Caco-2 (cell line): ENCODE measurements at regions of chr12 and their contacts with region 1.

Region 1: GRCh38 chr12:68428724-68429501 is 96.8 kb upstream of the MDM1 start:
- DNase-seq: peak; percentile 72 to 79
- H3K4me3 ChIP-seq: no peak overlapping the region
- H3K4me3 Mint-ChIP-seq: peak overlapping the region; percentile 45
- H3K27ac Mint-ChIP-seq: peak overlapping the region; percentile 94
- H3K4me1 ChIP-seq: peaks cover 54% of the 10 kb centered on the region
- H3K4me1 Mint-ChIP-seq: peaks cover 29% of the 10 kb centered on the region
- H3K27me3 ChIP-seq: no peaks in the 10 kb centered on the region
- H3K27me3 Mint-ChIP-seq: no peaks in the 10 kb centered on the region
- CTCF ChIP-seq: no peak

Region 2: GRCh38 chr12:68331869-68332727 is 96.8 kb before region 1 on chr12 and contains the start of gene MDM1:
- CTCF ChIA-PET with region 1: no interaction called
- POLR2A ChIA-PET with region 1: no interaction called
- intact Hi-C with region 1: loop called (anchors 1 kb)
- DNase-seq: peak; percentile 97 to 98
- H3K4me3 ChIP-seq: peak within 1 kb of the TSS; percentile 71
- H3K4me3 Mint-ChIP-seq: peak within 1 kb of the TSS; percentile 79
- H3K27ac Mint-ChIP-seq: peak within 1 kb of the TSS; percentile 51
- H3K4me1 ChIP-seq: peaks cover 22% of the 10 kb centered on the region; the same call in 1 of the 2 replicates
- H3K4me1 Mint-ChIP-seq: peaks cover 8% of the 10 kb centered on the region
- H3K27me3 ChIP-seq: no peaks in the 10 kb centered on the region
- H3K27me3 Mint-ChIP-seq: no peaks in the 10 kb centered on the region
- CTCF ChIP-seq: no peak
- total RNA-seq, gene MDM1: 19.0 and 22.2 TPM in 2 replicates

Region 3: GRCh38 chr12:68364893-68365725 is 63.8 kb before region 1 on chr12:
- CTCF ChIA-PET with region 1: no interaction called
- POLR2A ChIA-PET with region 1: interaction called, 3 read pairs
- intact Hi-C with region 1: loop called (anchors 1 kb)
- DNase-seq: peak; percentile 91 to 92
- H3K4me3 ChIP-seq: peak overlapping the region; percentile 30
- H3K4me3 Mint-ChIP-seq: peak overlapping the region; percentile 77
- H3K27ac Mint-ChIP-seq: peak overlapping the region; percentile 89
- H3K4me1 ChIP-seq: peaks cover 8% of the 10 kb centered on the region; the same call in 1 of the 2 replicates
- H3K4me1 Mint-ChIP-seq: peaks cover 22% of the 10 kb centered on the region
- H3K27me3 ChIP-seq: no peaks in the 10 kb centered on the region
- H3K27me3 Mint-ChIP-seq: no peaks in the 10 kb centered on the region
- CTCF ChIP-seq: no peak

Region 4: DNA sequence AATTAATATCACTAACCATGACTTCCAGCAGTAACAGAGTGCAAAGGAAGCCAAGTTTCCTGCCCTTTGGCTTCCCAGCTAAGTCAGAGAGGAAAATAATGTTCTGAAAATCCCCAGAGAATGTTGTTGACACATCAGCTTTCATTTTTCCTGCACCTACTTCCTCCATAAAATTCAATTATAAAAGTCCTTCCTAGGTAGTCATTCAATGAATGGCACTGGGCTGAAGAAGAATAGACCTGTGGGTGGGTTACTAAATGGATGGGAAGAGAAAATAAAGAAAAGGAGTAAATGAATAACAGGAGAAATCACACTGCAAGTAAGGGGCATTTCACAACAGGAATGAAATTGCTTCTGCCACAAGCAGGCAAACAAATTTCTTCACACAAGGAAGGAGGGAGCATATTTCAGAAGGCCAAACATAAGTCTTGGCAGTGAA is 23.6 kb before region 1 on chr12:
- CTCF ChIA-PET with region 1: no interaction called
- POLR2A ChIA-PET with region 1: no interaction called
- intact Hi-C with region 1: loop called (anchors 1 kb)
- DNase-seq: no peak
- H3K4me3 ChIP-seq: no peak overlapping the region
- H3K4me3 Mint-ChIP-seq: no peak overlapping the region
- H3K27ac Mint-ChIP-seq: no peak overlapping the region
- H3K4me1 ChIP-seq: no peaks in the 10 kb centered on the region
- H3K4me1 Mint-ChIP-seq: peaks cover 12% of the 10 kb centered on the region
- H3K27me3 ChIP-seq: no peaks in the 10 kb centered on the region
- H3K27me3 Mint-ChIP-seq: no peaks in the 10 kb centered on the region
- CTCF ChIP-seq: no peak

Region 5: DNA sequence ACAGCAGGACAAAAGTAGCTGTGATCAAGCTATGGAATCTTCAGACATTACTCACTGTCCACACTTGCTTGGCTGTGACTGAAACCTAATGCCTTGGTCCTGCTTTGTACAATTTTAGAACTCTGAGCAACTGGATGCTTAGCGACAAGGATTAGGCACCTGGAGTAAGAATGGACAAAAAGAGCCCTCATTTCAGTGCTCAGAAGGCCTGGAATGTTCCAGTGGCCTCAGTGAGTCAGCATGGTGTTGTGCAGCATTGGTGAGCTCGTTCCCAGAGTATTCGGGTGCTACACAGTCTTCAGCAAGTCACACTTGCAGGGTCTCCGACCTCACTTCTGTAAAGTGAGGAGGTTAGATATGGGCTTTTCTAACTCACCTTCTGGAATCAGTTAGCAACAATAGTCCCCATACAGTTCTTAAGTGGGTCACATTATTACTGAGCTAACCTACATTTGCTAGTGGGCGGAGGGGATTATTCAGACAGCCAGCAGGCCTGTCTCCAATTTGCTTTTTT is 11.2 kb after region 1 on chr12:
- CTCF ChIA-PET with region 1: no interaction called
- POLR2A ChIA-PET with region 1: interaction called, 10 read pairs
- intact Hi-C with region 1: no loop called
- DNase-seq: no peak
- H3K4me3 ChIP-seq: no peak overlapping the region
- H3K4me3 Mint-ChIP-seq: no peak overlapping the region
- H3K27ac Mint-ChIP-seq: peak overlapping the region; percentile 56
- H3K4me1 ChIP-seq: peaks cover 15% of the 10 kb centered on the region
- H3K4me1 Mint-ChIP-seq: peaks cover 43% of the 10 kb centered on the region
- H3K27me3 ChIP-seq: no peaks in the 10 kb centered on the region
- H3K27me3 Mint-ChIP-seq: no peaks in the 10 kb centered on the region
- CTCF ChIP-seq: no peak

Region 6: GRCh38 chr12:68610370-68611093 is 181.6 kb after region 1 on chr12 and contains the start of gene RAP1B:
- CTCF ChIA-PET with region 1: no interaction called
- POLR2A ChIA-PET with region 1: interaction called, 6 read pairs
- intact Hi-C with region 1: loop called (anchors 1 kb)
- DNase-seq: peak; percentile 91
- H3K4me3 ChIP-seq: peak within 1 kb of the TSS; percentile 92
- H3K4me3 Mint-ChIP-seq: peak within 1 kb of the TSS; percentile 76
- H3K27ac Mint-ChIP-seq: peak within 1 kb of the TSS; percentile 91
- H3K4me1 ChIP-seq: peaks cover 50% of the 10 kb centered on the region
- H3K4me1 Mint-ChIP-seq: peaks cover 29% of the 10 kb centered on the region
- H3K27me3 ChIP-seq: no peaks in the 10 kb centered on the region
- H3K27me3 Mint-ChIP-seq: no peaks in the 10 kb centered on the region
- CTCF ChIP-seq: no peak
- total RNA-seq, gene RAP1B: 216 and 239 TPM in 2 replicates